ENCODE measurements at regions of chr2 and their contacts with region 1.

Region 1: DNA sequence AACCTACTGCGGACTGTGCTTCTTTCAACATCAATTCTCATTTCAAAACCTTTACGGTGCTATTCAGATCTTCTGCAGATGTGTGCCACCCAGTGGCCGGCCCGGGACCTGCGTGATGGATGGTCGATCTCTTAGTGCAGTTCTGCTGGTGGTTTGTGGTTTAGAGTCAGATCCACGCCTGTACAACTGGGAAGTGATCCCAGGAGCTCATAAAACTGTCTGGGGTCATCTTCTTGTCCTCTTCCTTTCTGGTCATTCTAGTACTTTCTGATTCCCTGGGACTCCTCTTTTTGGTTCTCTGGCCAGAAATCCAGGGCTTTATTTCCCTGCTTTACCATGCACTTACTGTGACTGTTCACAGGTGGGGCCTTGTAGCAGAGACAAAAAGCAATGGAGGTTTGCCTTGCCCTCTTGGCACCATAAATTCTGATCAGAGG is 15.8 kb upstream of the SELENOI start:
- DNase-seq: peak; percentile 81
- H3K4me3 Mint-ChIP-seq: no peak overlapping the region
- H3K27ac Mint-ChIP-seq: no peak overlapping the region
- H3K4me1 Mint-ChIP-seq: peaks cover 14% of the 10 kb centered on the region
- H3K27me3 Mint-ChIP-seq: peaks cover 9% of the 10 kb centered on the region
- CTCF ChIP-seq: peak; percentile 82

Region 2: GRCh38 chr2:26235085-26235484 is 95.0 kb before region 1 on chr2:
- CTCF ChIA-PET with region 1: interaction called, 19 read pairs
- POLR2A ChIA-PET with region 1: interaction called, 11 read pairs
- intact Hi-C with region 1: loop called (anchors 1 kb)
- DNase-seq: peak; percentile 15
- H3K4me3 Mint-ChIP-seq: no peak overlapping the region
- H3K27ac Mint-ChIP-seq: no peak overlapping the region
- H3K4me1 Mint-ChIP-seq: peaks cover 17% of the 10 kb centered on the region
- H3K27me3 Mint-ChIP-seq: no peaks in the 10 kb centered on the region
- CTCF ChIP-seq: peak; percentile 30

Region 3: GRCh38 chr2:26299471-26300101 is 30.5 kb before region 1 on chr2:
- CTCF ChIA-PET with region 1: interaction called, 6 read pairs
- POLR2A ChIA-PET with region 1: interaction called, 15 read pairs
- intact Hi-C with region 1: no loop called
- DNase-seq: peak; percentile 52
- H3K4me3 Mint-ChIP-seq: no peak overlapping the region
- H3K27ac Mint-ChIP-seq: no peak overlapping the region
- H3K4me1 Mint-ChIP-seq: peaks cover 13% of the 10 kb centered on the region
- H3K27me3 Mint-ChIP-seq: no peaks in the 10 kb centered on the region
- CTCF ChIP-seq: no peak

Region 4: GRCh38 chr2:26469092-26469710 is 139.1 kb after region 1 on chr2:
- CTCF ChIA-PET with region 1: interaction called, 3 read pairs
- POLR2A ChIA-PET with region 1: no interaction called
- intact Hi-C with region 1: loop called (anchors 5 kb)
- DNase-seq: peak; percentile 84
- H3K4me3 Mint-ChIP-seq: no peak overlapping the region
- H3K27ac Mint-ChIP-seq: no peak overlapping the region
- H3K4me1 Mint-ChIP-seq: no peaks in the 10 kb centered on the region
- H3K27me3 Mint-ChIP-seq: no peaks in the 10 kb centered on the region
- CTCF ChIP-seq: peak; percentile 75

Measured in MCF 10A (cell line).